ENCODE measurements at regions of chr5 and their contacts with region 1.

Region 1: GRCh38 chr5:141585594-141585993 is 33.2 kb downstream of the DIAPH1 start:
- DNase-seq: no peak
- H3K4me3 ChIP-seq: no peak overlapping the region
- H3K27ac ChIP-seq: no peak overlapping the region
- H3K4me1 ChIP-seq: no peaks in the 10 kb centered on the region
- H3K27me3 ChIP-seq: no peaks in the 10 kb centered on the region
- CTCF ChIP-seq: no peak
- POLR2A ChIP-seq: no peak

Region 2: GRCh38 chr5:141484641-141485311 is 100.8 kb before region 1 on chr5 and contains the start of gene PCDHGC4:
- intact Hi-C with region 1: no loop called
- DNase-seq: peak in 1 of 7 donors; percentile 26
- H3K4me3 ChIP-seq: peak within 1 kb of the TSS in 2 of 4 donors; percentile 13 to 51
- H3K27ac ChIP-seq: peak within 1 kb of the TSS in 1 of 5 donors; percentile 9
- H3K4me1 ChIP-seq: peaks cover 4 to 36% of the 10 kb centered on the region in 2 donors
- H3K27me3 ChIP-seq: no peaks in the 10 kb centered on the region
- CTCF ChIP-seq: no peak
- POLR2A ChIP-seq: no peak
- total RNA-seq, gene PCDHGC4: 0.30 to 6.1 (median 1.8) TPM

Region 3: DNA sequence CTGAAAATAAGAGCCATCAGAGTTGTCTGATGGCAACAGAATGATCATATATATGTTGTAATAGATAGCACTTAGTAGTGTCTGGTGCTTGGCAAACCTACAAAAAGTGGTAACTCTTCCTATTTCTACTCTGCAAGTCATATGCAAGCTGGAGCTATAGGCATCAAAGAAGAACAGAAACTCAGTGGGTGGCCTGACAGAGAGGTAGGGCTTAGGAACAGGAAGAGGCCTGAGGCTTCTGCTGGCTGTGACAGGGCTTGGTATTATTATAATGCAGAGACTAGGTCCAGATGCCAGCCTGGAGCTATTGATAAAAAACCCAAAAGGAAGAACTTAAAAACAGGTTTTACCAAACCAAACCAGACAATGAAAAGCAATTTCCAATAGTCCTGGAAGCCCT is 37.6 kb after region 1 on chr5:
- intact Hi-C with region 1: loop called (anchors 5 kb)
- DNase-seq: no peak
- H3K4me3 ChIP-seq: no peak overlapping the region
- H3K27ac ChIP-seq: peak overlapping the region in 1 of 5 donors; percentile 36
- H3K4me1 ChIP-seq: peaks cover 0 to 12% of the 10 kb centered on the region in 2 donors
- H3K27me3 ChIP-seq: no peaks in the 10 kb centered on the region
- CTCF ChIP-seq: no peak
- POLR2A ChIP-seq: no peak

Region 4: DNA sequence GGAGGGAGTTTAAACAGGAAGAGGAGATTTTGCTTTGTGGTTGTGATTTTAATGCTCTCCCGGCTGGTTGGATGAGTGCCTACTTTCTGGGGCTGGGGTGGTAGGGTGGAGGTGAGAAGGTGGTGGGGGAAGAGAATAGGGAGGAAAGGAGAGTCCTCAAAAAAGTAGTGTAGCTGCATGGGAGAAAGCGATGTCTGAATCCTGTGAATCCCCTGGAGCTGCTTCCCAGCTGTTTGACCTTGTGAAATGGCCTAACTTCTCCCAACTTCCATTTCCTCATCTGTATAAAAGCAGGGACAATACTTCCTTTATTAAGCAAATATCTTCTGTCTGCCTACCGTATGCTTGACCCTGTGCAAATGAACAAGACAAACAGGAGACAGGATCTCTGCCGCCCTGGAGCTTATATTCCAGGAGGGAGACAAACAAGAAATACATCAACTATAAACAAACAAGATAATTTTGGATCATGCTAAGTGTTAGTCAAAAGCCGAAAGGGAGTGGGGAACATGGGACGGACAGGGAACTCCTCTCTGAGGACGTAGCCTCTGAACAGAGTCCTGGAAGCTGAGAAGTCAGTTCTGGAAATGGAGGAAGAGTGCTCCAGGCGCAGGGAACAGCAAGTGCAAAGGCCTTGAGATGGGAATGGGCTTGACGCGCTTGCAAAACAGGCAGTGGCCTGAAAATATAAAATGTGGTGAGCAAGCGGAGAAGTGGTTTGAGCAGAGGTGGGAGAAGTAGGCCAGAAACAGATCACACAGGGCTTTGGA is 635.7 kb after region 1 on chr5:
- intact Hi-C with region 1: no loop called
- DNase-seq: no peak
- H3K4me3 ChIP-seq: no peak overlapping the region
- H3K27ac ChIP-seq: peak overlapping the region in 1 of 5 donors; percentile 23
- H3K4me1 ChIP-seq: peaks cover 0 to 15% of the 10 kb centered on the region in 2 donors
- H3K27me3 ChIP-seq: no peaks in the 10 kb centered on the region
- CTCF ChIP-seq: no peak
- POLR2A ChIP-seq: no peak

Measured in adrenal gland (tissue), 19 donors.